Pancreas (tissue), 10 donors: ENCODE measurements at regions of chr2 and their contacts with region 1.

Region 1: GRCh38 chr2:161223139-161223732 is 63.0 kb downstream of the TANK start:
- DNase-seq: no peak
- ATAC-seq: peak in 3 of 4 donors; percentile 70 to 80 (median 71)
- H3K4me3 ChIP-seq: no peak overlapping the region
- H3K27ac ChIP-seq: no peak overlapping the region
- H3K4me1 ChIP-seq: peaks cover 0 to 4% (median 0%) of the 10 kb centered on the region in 3 donors
- H3K27me3 ChIP-seq: no peaks in the 10 kb centered on the region
- CTCF ChIP-seq: peak in 3 of 4 donors; percentile 51 to 64 (median 55)

Region 2: DNA sequence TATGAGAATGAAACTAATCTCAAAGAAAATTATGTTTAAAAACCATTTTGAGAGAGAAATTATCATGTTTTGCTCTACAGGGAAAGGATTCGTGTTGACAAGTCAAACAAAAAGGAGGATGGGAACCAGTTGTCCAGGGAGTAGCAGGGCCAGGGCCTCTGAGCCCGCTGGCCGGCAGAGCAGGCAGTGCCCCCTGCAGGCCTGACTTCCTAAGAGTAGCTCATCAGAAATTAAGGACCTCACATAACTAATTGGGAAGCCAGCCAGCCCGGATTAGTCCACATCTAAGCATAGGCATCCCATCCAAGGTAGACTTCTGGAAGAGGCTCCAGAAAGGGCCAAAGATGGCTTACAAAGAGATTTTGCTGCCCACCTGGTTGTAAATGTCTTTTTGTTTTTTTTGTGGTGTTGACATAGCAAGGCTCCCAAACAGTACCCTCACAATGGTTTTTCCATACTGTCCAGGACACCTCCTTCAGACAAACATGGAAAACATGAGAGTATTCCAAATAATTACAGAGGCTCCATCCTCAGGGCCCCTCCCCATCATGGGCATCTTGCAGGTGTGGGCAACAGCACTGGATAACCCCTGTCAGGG is 304.2 kb before region 1 on chr2:
- intact Hi-C with region 1: no loop called
- DNase-seq: peak in 5 of 6 donors; percentile 9 to 58 (median 26)
- ATAC-seq: peak; percentile 55 to 93 (median 72)
- H3K4me3 ChIP-seq: no peak overlapping the region
- H3K27ac ChIP-seq: no peak overlapping the region
- H3K4me1 ChIP-seq: no peaks in the 10 kb centered on the region
- H3K27me3 ChIP-seq: no peaks in the 10 kb centered on the region
- CTCF ChIP-seq: peak in 2 of 4 donors; percentile 31 to 41

Region 3: GRCh38 chr2:161273038-161273760 is 50.0 kb after region 1 on chr2:
- intact Hi-C with region 1: loop called in 1 of 3 experiments (anchors 10 kb)
- DNase-seq: no peak
- ATAC-seq: peak; percentile 46 to 69 (median 54)
- H3K4me3 ChIP-seq: no peak overlapping the region
- H3K27ac ChIP-seq: no peak overlapping the region
- H3K4me1 ChIP-seq: no peaks in the 10 kb centered on the region
- H3K27me3 ChIP-seq: no peaks in the 10 kb centered on the region
- CTCF ChIP-seq: peak; percentile 41 to 75 (median 60)